SK-N-SH (cell line): ENCODE measurements at regions of chr13 and their contacts with region 1.

Region 1: GRCh38 chr13:113816946-113817859 is 46.7 kb downstream of the GAS6 start:
- DNase-seq: peak; percentile 91
- H3K4me3 ChIP-seq: peak overlapping the region in 1 of 2 experiments; percentile 40; a peak in 1 of 4 replicates
- H3K27ac ChIP-seq: peak overlapping the region in 1 of 2 experiments; percentile 60; a peak in 2 of 4 replicates
- H3K4me1 ChIP-seq: peaks cover 36 to 52% of the 10 kb centered on the region in 2 experiments; a peak in 3 of 4 replicates
- H3K27me3 ChIP-seq: no peaks in the 10 kb centered on the region
- CTCF ChIP-seq: peak; percentile 82
- EP300 ChIP-seq: no peak
- RAD21 ChIP-seq: peak; percentile 97

Region 2: GRCh38 chr13:113863436-113864272 is 46.5 kb after region 1 on chr13 and contains the start of gene GAS6:
- CTCF ChIA-PET with region 1: interaction called, 15 read pairs
- POLR2A ChIA-PET with region 1: no interaction called
- DNase-seq: peak; percentile 89
- H3K4me3 ChIP-seq: peak within 1 kb of the TSS; percentile 67 to 73
- H3K27ac ChIP-seq: peak within 1 kb of the TSS; percentile 38 to 72
- H3K4me1 ChIP-seq: peaks cover 0 to 29% of the 10 kb centered on the region in 2 experiments; a peak in 1 of 4 replicates
- H3K27me3 ChIP-seq: no peaks in the 10 kb centered on the region
- CTCF ChIP-seq: no peak; the same call in 1 of the 2 replicates
- EP300 ChIP-seq: no peak
- RAD21 ChIP-seq: no peak
- polyA plus RNA-seq, gene GAS6: 380 and 406 TPM in 2 replicates